Ovary (tissue), 10 donors: ENCODE measurements at regions of chr1 and their contacts with region 1.

Region 1: DNA sequence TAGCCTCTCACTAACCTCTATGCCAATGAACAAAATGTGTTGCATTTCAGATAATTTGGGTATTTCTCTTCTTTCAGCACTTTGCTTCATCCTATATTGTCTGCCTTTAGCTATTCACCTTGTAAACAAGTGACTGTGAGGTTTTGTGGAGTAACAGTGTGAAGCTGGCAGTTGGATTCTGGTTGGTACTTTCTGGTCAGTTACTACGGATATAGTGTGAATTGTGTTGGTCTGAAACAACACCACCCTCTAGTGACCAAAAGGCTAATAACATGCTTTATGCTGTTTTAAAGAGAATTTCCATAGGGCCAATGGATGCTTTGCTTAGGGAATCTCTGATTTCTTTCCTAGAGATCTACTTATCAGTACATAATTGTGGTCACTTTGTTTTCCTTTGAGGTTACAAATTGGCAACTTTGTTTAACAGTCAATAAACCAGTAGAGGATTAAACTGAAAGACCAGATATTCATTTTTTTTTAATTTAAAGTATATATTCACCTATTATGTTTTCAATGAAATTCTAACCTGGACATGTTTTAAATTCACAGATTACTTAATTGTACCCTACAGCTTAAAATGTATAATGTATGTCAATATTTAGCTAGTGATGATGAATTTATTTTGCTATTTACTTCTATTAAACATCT is 2.5 kb upstream of the PTGER3 start:
- DNase-seq: no peak
- H3K4me3 ChIP-seq: no peak overlapping the region
- H3K27ac ChIP-seq: no peak overlapping the region
- H3K4me1 ChIP-seq: peaks cover 4% of the 10 kb centered on the region
- H3K27me3 ChIP-seq: no peaks in the 10 kb centered on the region
- CTCF ChIP-seq: peak; percentile 47 to 58 (median 57)
- EP300 ChIP-seq: no peak
- POLR2A ChIP-seq: no peak

Region 2: GRCh38 chr1:69148731-69149130 is 1901.3 kb before region 1 on chr1:
- intact Hi-C with region 1: loop called in 1 of 4 experiments (anchors 10 kb)
- DNase-seq: no peak
- H3K4me3 ChIP-seq: no peak overlapping the region
- H3K27ac ChIP-seq: no peak overlapping the region
- H3K4me1 ChIP-seq: no peaks in the 10 kb centered on the region
- H3K27me3 ChIP-seq: no peaks in the 10 kb centered on the region
- CTCF ChIP-seq: no peak
- EP300 ChIP-seq: no peak
- POLR2A ChIP-seq: no peak

Region 3: GRCh38 chr1:70528590-70529333 is 521.3 kb before region 1 on chr1:
- intact Hi-C with region 1: loop called in 2 of 4 experiments (anchors 5 to 10 kb)
- DNase-seq: peak in 3 of 5 donors; percentile 18 to 42 (median 18)
- H3K4me3 ChIP-seq: no peak overlapping the region
- H3K27ac ChIP-seq: no peak overlapping the region
- H3K4me1 ChIP-seq: no peaks in the 10 kb centered on the region
- H3K27me3 ChIP-seq: no peaks in the 10 kb centered on the region
- CTCF ChIP-seq: peak in 2 of 3 donors; percentile 8 to 43
- EP300 ChIP-seq: no peak
- POLR2A ChIP-seq: no peak

Region 4: DNA sequence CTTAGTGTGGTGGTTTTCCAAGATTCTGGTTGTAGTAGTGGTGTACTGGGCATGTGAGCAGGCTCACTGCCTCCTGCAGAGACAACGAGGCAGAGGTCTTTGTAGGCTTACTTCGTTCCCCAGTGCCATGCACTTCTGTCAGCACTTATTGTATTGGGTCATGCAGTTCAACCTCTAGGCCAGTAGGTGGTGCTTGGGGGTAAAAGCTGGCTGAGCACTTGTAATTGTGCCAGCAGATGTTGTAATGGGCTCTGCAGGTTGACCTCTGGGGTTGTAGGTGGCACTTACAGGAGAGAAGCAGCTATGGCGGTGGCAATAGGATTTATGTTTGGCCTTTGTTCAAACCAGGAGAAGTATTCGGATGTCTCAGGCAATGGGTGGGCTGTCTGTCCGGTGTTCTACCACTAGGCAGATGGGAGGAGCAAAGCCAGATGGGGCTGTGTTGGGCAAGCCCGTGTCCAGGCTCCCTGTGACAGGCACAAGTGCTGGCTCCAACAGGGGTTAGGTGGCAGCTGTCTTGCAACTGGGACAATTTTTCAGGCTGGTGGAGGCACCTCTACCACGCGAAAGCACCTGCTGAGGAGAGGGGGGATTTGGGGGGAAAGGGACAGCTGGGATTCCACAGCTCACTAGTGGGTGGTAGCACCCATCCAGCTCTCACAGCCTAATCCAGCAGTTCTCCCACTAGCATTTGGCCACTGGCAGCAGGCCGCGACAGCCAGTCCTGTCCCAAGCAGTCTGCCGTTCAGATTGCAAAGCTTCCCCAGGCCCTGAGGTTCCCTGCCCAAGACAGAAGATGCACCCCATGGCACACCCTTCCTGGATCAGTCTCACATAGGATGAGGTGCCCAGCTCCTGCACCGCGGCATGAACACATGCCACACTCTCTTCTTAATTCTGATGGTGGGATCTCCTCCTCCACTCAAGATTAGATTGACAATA is 364.5 kb before region 1 on chr1:
- intact Hi-C with region 1: loop called in 3 of 4 experiments (anchors 1 to 5 kb)
- DNase-seq: peak; percentile 32 to 70 (median 55)
- H3K4me3 ChIP-seq: no peak overlapping the region
- H3K27ac ChIP-seq: no peak overlapping the region
- H3K4me1 ChIP-seq: no peaks in the 10 kb centered on the region
- H3K27me3 ChIP-seq: no peaks in the 10 kb centered on the region
- CTCF ChIP-seq: peak; percentile 58 to 77 (median 63)
- EP300 ChIP-seq: no peak
- POLR2A ChIP-seq: no peak